ENCODE measurements at regions of chr14 and their contacts with region 1.

Region 1: DNA sequence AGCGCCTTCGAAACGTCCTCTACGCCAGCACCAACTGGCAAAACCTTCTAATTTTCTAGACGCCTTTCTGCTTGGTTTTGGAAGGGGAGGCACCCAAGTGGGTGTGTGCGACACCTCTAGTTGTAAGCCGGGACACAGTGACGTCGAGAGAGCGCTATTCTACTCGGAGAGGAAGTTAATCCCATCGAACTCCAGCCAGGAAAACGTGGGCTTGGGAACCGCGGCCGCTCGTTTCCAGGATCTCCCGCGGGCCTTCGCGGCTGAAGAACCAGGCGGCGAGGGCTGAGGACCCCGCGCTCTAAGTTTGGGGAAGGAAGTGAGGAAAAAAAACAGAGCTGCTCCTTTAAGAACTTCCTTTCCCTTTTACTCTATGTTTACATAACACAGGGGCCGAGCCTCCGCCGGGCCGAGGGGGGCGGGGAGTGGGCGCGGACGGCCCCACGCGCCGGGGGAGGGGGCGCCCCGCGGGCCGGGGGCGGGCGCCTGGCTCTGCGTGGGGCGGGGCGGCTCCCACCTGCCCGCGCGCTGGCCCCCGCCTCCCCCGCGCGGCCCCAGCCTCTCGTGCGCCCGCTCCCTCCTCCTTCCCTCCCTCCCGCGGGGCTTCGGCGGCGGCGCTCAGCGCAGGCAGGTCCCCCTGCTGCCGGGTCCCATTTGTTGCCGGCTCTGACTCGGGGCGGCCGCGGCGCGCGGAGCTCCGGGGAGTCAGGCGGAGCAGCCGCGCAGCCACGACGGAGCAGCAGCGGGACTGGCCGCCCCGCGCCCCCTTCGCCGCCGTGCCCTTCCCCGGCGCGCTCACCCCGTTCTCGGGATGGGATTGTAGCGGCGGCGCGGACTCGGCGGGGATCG is at the start of gene PELI2:
- DNase-seq: peak; percentile 80
- H3K4me3 Mint-ChIP-seq: peak within 1 kb of the TSS; percentile 90
- H3K27ac Mint-ChIP-seq: peak within 1 kb of the TSS; percentile 83
- H3K4me1 Mint-ChIP-seq: peaks cover 41% of the 10 kb centered on the region
- H3K27me3 Mint-ChIP-seq: peaks cover 11% of the 10 kb centered on the region
- total RNA-seq, gene PELI2: 6.4 to 6.6 TPM

Region 2: DNA sequence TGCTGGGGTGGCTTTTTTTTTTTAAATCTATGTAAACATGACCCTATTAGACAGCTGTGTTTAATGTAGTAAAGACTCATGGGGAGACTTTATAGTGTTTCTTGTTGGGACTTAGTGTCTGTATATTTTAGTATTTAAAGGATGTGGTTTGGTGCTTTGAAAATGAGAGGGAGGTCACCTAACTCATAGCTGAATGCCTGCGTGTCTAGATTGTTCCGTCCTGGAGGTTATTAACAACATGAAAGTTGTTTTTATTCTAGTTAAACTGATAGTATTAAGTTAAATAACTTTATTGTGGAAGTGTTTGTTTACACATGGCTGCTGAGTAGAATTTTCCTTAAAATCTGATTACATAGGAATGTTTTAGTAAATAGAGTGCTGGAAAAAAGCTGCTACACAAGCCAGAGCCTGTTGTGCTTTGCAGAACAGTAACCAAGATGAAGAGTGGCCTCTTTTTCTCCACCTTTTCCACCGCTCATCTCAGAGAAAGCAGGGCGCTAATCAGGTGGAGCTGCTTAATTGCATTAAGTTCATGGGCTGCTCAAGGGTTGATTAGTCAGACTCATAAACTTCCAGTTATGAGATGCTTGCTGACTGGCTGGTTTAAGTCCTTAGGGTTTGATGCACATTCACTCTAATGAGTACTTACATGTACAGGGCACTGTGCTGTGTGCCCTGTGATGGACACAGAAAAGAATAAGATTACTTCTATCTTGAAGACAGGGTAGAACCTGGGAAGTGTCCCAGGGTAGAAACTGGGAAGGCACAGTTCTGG is 784.1 kb before region 1 on chr14:
- CTCF ChIA-PET with region 1: no interaction called
- POLR2A ChIA-PET with region 1: no interaction called
- intact Hi-C with region 1: loop called (anchors 10 kb)
- DNase-seq: peak; percentile 20
- H3K4me3 Mint-ChIP-seq: peak overlapping the region; percentile 9
- H3K27ac Mint-ChIP-seq: peak overlapping the region; percentile 57
- H3K4me1 Mint-ChIP-seq: peaks cover 85% of the 10 kb centered on the region
- H3K27me3 Mint-ChIP-seq: no peaks in the 10 kb centered on the region

Region 3: GRCh38 chr14:55752586-55753390 is 365.2 kb before region 1 on chr14:
- CTCF ChIA-PET with region 1: no interaction called
- POLR2A ChIA-PET with region 1: no interaction called
- intact Hi-C with region 1: no loop called
- DNase-seq: no peak
- H3K4me3 Mint-ChIP-seq: no peak overlapping the region
- H3K27ac Mint-ChIP-seq: no peak overlapping the region
- H3K4me1 Mint-ChIP-seq: no peaks in the 10 kb centered on the region
- H3K27me3 Mint-ChIP-seq: no peaks in the 10 kb centered on the region

Region 4: DNA sequence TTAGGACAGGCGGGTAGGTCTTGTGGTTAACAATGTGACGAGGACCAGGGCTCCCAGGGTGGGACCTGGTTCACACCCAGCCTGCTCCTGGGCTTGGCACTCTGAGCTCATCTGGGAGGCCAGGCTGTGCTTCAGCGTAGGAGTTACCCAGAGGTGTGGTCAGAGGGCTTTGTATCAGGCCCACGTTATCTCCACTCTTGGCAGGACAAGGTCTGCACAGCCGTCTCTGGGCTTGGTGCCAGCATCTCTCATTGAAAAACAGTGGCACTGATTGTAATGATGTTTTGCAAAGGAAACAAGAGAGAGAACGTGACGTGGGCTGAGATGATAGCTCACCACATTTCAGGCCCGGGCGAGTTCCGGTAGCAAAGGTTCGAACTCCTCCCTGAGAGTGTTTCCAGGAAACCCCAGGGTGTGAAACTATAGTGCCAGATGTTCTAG is 310.9 kb before region 1 on chr14:
- CTCF ChIA-PET with region 1: no interaction called
- POLR2A ChIA-PET with region 1: no interaction called
- intact Hi-C with region 1: loop called (anchors 5 kb)
- DNase-seq: peak; percentile 86
- H3K4me3 Mint-ChIP-seq: peak overlapping the region; percentile 33
- H3K27ac Mint-ChIP-seq: peak overlapping the region; percentile 82
- H3K4me1 Mint-ChIP-seq: peaks cover 54% of the 10 kb centered on the region
- H3K27me3 Mint-ChIP-seq: no peaks in the 10 kb centered on the region

Region 5: DNA sequence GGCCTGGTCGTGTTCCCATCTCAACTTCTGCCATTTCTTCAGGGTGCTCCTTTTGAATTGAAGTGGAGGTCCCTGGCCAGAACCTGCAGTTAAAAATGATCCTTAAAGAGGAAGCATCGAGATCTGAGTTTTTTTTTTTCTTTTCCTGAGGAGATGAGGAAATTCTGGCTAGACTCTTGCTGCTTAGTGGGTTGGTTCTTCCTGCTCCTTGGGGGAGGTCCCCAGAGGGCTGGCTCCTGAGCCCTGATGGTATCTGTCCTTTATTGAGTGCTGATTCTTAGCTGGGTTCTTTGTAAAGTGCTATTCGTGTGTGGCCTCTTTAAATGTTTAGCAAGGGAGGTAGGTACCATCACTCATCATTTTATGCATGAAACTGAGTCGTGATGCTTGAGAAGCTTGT is 11.9 kb after region 1 on chr14:
- CTCF ChIA-PET with region 1: interaction called, 16 read pairs
- POLR2A ChIA-PET with region 1: interaction called, 19 read pairs
- intact Hi-C with region 1: no loop called
- DNase-seq: no peak
- H3K4me3 Mint-ChIP-seq: no peak overlapping the region
- H3K27ac Mint-ChIP-seq: no peak overlapping the region
- H3K4me1 Mint-ChIP-seq: peaks cover 48% of the 10 kb centered on the region
- H3K27me3 Mint-ChIP-seq: peaks cover under 1% of the 10 kb centered on the region

Region 6: DNA sequence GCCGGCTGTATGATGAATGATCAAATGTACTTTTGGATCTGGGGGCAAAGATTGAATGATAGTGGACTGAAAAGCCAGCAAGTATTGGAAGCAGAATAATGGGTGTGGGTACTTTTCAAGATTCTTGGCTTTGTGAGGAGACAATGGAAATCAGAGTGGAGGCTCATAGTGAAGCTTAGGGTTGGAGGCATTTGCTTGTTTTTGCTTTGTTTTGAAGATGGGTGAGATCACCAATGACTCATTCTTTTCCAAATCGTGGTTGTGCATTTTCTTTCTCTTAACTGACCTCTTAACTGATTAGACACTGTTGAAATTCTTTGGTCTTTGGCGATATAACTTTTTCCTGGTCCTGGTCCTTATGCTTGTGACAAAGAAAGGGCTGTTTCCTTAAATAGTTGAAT is 54.6 kb after region 1 on chr14:
- CTCF ChIA-PET with region 1: no interaction called
- POLR2A ChIA-PET with region 1: no interaction called
- intact Hi-C with region 1: loop called (anchors 2 kb)
- DNase-seq: no peak
- H3K4me3 Mint-ChIP-seq: no peak overlapping the region
- H3K27ac Mint-ChIP-seq: no peak overlapping the region
- H3K4me1 Mint-ChIP-seq: peaks cover 39% of the 10 kb centered on the region
- H3K27me3 Mint-ChIP-seq: no peaks in the 10 kb centered on the region

Region 7: DNA sequence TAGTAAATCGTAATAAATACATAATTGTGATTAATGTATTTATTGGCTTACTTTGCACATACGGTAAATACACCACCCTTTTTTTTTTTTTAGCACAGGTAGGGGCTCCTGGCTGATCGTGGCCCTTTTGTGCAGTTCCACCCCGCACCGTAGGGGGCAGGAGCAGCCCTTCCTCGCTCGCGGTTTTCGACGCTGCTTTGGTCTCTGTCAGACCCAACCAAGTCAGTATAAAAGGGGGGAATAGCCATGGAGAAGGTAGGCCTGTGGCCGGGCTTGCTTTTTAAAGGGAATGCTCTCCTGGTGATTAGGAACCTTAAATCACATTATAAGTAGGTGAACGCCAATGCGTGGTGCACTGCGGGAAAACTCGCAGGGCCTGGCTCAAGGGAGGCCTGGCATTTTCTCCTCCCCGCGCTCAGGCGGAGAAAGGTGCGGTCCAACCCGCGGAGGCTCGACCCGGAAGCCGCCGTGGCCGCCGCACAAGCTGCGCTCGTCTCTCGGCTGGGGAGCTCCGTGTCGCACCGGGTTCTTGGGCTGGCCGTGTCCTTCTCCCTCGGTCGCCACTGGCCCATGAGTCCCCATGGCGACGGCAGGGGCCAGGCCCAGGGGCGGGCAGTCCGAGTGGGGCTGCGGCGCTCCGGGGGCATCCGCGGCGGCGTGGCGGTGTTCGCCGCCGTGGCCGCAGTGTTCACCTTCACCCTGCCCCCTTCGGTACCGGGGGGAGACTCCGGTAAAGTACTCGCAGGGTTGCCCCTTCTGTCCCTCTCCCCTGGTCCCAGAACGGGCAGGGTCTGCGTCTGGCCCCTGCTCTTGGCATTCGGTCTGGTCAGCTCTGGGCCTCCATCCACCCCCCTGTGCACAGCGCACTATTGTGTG is 461.6 kb after region 1 on chr14 and contains the start of gene TMEM260:
- CTCF ChIA-PET with region 1: no interaction called
- POLR2A ChIA-PET with region 1: no interaction called
- intact Hi-C with region 1: loop called (anchors 2 kb)
- DNase-seq: peak; percentile 93
- H3K4me3 Mint-ChIP-seq: peak within 1 kb of the TSS; percentile 94
- H3K27ac Mint-ChIP-seq: peak within 1 kb of the TSS; percentile 95
- H3K4me1 Mint-ChIP-seq: peaks cover 38% of the 10 kb centered on the region
- H3K27me3 Mint-ChIP-seq: no peaks in the 10 kb centered on the region
- total RNA-seq, gene TMEM260: 11.4 to 13.2 TPM